HEK293 (cell line): ENCODE measurements at regions of chr2 and their contacts with region 1.

Region 1: GRCh38 chr2:44181648-44182047 is 13.0 kb downstream of the PPM1B start:
- H3K4me3 ChIP-seq: no peak overlapping the region
- H3K27ac ChIP-seq: no peak overlapping the region
- H3K4me1 ChIP-seq: peaks cover 4% of the 10 kb centered on the region; the same call in 1 of the 2 replicates
- CTCF ChIP-seq: no peak

Region 2: DNA sequence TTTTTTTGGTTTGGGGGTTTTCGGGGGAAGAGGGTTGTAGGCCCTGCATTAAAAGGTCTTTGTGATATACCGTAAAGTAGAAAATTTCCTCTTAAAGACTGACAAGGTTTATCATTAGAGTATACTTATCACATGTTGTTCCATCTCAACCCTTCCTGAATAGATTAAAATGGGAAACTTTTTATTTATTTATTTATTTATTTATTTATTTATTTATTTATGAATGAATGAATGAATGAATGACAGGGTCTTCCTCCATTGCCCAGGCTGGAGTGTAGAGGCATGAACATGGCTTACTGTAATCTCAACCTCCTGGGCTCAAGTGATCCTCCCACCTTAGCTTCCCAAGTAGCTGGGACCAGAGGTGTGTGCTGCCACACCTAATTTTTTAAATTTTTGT is 45.1 kb after region 1 on chr2:
- CTCF ChIA-PET with region 1: no interaction called
- POLR2A ChIA-PET with region 1: interaction called, 11 read pairs
- H3K4me3 ChIP-seq: no peak overlapping the region
- H3K27ac ChIP-seq: no peak overlapping the region
- H3K4me1 ChIP-seq: no peaks in the 10 kb centered on the region
- CTCF ChIP-seq: no peak